ENCODE measurements at regions of chr1 and their contacts with region 1.

Region 1: DNA sequence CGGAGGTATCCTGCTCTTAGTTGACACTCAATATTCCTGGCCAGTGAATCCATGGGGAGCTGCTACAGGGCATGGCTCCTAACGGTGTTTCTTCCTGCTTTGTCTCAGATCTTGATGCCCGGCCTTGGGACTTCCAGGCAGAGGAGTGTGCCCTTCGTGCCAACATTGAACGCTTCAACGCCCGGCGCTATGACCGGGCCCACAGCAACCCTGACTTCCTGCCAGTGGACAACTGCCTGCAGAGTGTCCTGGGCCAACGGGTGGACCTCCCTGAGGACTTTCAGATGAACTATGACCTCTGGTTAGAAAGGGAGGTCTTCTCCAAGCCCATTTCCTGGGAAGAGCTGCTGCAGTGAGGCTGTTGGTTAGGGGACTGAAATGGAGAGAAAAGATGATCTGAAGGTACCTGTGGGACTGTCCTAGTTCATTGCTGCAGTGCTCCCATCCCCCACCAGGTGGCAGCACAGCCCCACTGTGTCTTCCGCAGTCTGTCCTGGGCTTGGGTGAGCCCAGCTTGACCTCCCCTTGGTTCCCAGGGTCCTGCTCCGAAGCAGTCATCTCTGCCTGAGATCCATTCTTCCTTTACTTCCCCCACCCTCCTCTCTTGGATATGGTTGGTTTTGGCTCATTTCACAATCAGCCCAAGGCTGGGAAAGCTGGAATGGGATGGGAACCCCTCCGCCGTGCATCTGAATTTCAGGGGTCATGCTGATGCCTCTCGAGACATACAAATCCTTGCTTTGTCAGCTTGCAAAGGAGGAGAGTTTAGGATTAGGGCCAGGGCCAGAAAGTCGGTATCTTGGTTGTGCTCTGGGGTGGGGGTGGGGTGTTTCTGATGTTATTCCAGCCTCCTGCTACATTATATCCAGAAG is 16.7 kb downstream of the ALX3 start:
- DNase-seq: peak; percentile 60 to 78 (median 65)
- ATAC-seq: peak; percentile 49 to 75 (median 72)
- H3K4me3 ChIP-seq: no peak overlapping the region
- H3K27ac ChIP-seq: no peak overlapping the region
- H3K4me1 ChIP-seq: peaks cover 0 to 30% (median 19%) of the 10 kb centered on the region in 12 donors
- H3K27me3 ChIP-seq: no peaks in the 10 kb centered on the region
- CTCF ChIP-seq: peak; percentile 93 to 98 (median 96)
- POLR2A ChIP-seq: no peak

Region 2: GRCh38 chr1:110087812-110088738 is 34.3 kb after region 1 on chr1:
- intact Hi-C with region 1: loop called in 1 of 10 experiments (anchors 5 kb)
- DNase-seq: peak in 2 of 5 donors; percentile 40 to 44
- ATAC-seq: peak; percentile 39 to 78 (median 74)
- H3K4me3 ChIP-seq: no peak overlapping the region
- H3K27ac ChIP-seq: no peak overlapping the region
- H3K4me1 ChIP-seq: peaks cover 3 to 27% (median 13%) of the 10 kb centered on the region in 12 donors
- H3K27me3 ChIP-seq: peaks cover 0 to 35% (median 16%) of the 10 kb centered on the region in 9 donors
- CTCF ChIP-seq: peak; percentile 56 to 81 (median 70)
- POLR2A ChIP-seq: no peak

Region 3: GRCh38 chr1:110106013-110106941 is 52.5 kb after region 1 on chr1:
- intact Hi-C with region 1: loop called (anchors 1 to 5 kb)
- DNase-seq: peak; percentile 58 to 78 (median 65)
- ATAC-seq: peak; percentile 63 to 89 (median 84)
- H3K4me3 ChIP-seq: no peak overlapping the region
- H3K27ac ChIP-seq: no peak overlapping the region
- H3K4me1 ChIP-seq: peaks cover 0 to 14% (median 2%) of the 10 kb centered on the region in 12 donors
- H3K27me3 ChIP-seq: peaks cover 0 to 7% (median 0%) of the 10 kb centered on the region in 9 donors
- CTCF ChIP-seq: peak; percentile 87 to 97 (median 91)
- POLR2A ChIP-seq: no peak

Region 4: GRCh38 chr1:110188035-110188618 is 134.3 kb after region 1 on chr1:
- intact Hi-C with region 1: loop called in 1 of 10 experiments (anchors 10 kb)
- DNase-seq: peak in 2 of 5 donors; percentile 46 to 53
- ATAC-seq: peak; percentile 40 to 84 (median 62)
- H3K4me3 ChIP-seq: no peak overlapping the region
- H3K27ac ChIP-seq: peak overlapping the region; percentile 1 to 84 (median 64)
- H3K4me1 ChIP-seq: peaks cover 7 to 59% (median 28%) of the 10 kb centered on the region in 12 donors
- H3K27me3 ChIP-seq: no peaks in the 10 kb centered on the region
- CTCF ChIP-seq: no peak
- POLR2A ChIP-seq: no peak

Region 5: DNA sequence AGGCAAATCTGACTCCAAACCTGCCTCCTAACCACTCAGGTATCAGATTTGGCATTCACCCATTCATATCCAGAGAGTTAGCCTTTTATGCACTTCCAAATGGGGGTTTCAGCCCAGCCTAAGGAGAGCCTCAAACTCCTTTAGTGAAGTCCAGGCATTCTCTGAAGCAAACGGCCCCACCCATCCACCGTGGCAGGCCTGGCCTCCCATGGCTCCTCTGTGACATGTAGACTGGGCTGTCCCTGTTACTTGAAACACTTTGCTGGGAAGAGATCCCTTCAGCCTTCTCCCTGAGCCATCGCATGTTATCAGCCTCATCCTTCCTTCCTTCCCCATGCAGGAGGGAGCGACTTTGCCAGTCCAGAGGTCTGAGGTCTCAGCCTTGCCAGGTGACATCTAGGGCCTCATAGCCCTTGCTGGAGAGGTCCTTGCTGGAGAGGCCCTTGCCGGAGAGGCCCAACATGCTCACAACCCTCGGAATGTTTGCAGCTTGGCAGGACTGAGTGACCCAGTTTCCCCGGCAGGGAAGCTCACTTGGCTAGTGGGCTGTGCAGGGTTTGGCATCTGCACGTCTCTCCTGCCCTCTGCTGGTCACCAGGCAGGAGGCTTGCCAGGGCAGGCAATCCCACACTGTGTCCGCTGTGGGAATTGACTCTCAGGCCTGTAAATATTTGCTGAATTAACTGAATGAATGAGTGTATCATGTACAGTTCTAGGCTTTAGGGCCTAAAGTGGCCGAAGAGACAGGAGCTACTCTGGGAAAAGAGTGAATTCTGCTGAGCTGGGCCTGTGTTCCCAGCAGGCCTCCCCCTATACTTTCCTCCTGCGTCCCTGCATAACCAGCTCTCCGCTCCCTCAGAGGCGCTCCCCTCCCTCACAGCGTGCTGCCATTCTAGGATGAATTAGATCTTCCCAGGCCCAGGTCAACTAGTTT is 258.7 kb after region 1 on chr1:
- intact Hi-C with region 1: loop called in 2 of 10 experiments (anchors 5 to 10 kb)
- DNase-seq: peak; percentile 83 to 89 (median 85)
- ATAC-seq: peak; percentile 89 to 96 (median 94)
- H3K4me3 ChIP-seq: no peak overlapping the region
- H3K27ac ChIP-seq: no peak overlapping the region
- H3K4me1 ChIP-seq: peaks cover 0 to 50% (median 17%) of the 10 kb centered on the region in 12 donors
- H3K27me3 ChIP-seq: no peaks in the 10 kb centered on the region
- CTCF ChIP-seq: peak; percentile 84 to 98 (median 94)
- POLR2A ChIP-seq: no peak

Measured in heart left ventricle (tissue), 16 donors.